ENCODE measurements at regions of chr10 and their contacts with region 1.

Region 1: GRCh38 chr10:88926566-88927415 is 25.8 kb downstream of the ACTA2 start:
- DNase-seq: no peak
- ATAC-seq: peak; percentile 81

Region 2: DNA sequence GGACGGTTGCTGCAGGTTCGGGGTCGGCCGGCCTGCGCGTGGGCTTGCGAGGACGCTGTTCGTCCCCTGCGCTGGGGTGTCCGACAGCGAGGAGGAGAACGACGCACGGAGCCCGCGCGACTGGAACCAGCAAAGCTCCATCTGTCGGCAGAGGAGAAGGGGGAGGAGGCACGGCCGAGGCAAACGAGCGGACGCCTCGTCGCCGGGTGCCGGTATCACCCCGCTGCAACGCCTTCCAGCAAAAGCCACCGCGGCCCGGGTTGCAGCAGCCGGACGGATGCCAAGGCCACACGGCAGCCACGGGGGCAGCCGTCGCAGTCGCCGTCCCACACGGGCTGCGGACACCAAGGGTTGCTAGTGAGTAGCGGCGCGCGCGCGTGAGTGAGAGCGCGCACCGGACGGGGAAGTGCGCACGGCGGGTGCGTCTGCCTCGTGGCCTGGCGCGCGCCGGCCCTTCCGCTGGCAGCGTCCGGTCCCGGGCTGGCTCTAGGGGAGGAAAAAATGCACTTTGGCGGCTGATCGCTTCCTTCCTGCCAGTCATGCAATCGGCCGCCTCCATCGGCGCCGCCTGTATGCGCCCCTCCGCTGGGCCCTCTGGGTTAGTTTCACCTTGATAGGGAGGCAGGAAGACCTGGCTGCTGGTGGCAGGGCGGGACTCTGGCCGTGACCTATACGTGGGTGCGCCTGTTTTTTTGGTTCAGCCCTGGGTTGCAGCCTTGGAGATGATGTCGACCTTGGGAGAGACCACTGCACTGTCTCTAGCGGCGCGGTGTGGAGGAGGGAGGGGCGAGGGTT is 46.3 kb before region 1 on chr10:
- intact Hi-C with region 1: loop called (anchors 2 kb)
- DNase-seq: peak; percentile 95
- ATAC-seq: peak; percentile 96

Region 3: GRCh38 chr10:88996927-88997326 is 70.1 kb after region 1 on chr10:
- intact Hi-C with region 1: no loop called
- DNase-seq: no peak
- ATAC-seq: no peak